CD4-positive, alpha-beta memory T cell (primary cell): ENCODE measurements at regions of chr17 and their contacts with region 1.

Region 1: GRCh38 chr17:7834962-7835813 is 1.2 kb downstream of the KDM6B start:
- DNase-seq: peak; percentile 90 to 98 (median 92)
- H3K4me3 ChIP-seq: peak overlapping the region; percentile 76 to 84
- H3K4me3 Mint-ChIP-seq: peak overlapping the region; percentile 90 to 98 (median 94)
- H3K27ac ChIP-seq: peak overlapping the region; percentile 98
- H3K27ac Mint-ChIP-seq: peak overlapping the region; percentile 99 to 100 (median 99)
- H3K4me1 ChIP-seq: peaks cover 45% of the 10 kb centered on the region
- H3K4me1 Mint-ChIP-seq: peaks cover 36 to 64% (median 42%) of the 10 kb centered on the region in 4 donors
- H3K27me3 ChIP-seq: no peaks in the 10 kb centered on the region
- H3K27me3 Mint-ChIP-seq: peaks cover 0 to 9% of the 10 kb centered on the region in 2 donors

Region 2: DNA sequence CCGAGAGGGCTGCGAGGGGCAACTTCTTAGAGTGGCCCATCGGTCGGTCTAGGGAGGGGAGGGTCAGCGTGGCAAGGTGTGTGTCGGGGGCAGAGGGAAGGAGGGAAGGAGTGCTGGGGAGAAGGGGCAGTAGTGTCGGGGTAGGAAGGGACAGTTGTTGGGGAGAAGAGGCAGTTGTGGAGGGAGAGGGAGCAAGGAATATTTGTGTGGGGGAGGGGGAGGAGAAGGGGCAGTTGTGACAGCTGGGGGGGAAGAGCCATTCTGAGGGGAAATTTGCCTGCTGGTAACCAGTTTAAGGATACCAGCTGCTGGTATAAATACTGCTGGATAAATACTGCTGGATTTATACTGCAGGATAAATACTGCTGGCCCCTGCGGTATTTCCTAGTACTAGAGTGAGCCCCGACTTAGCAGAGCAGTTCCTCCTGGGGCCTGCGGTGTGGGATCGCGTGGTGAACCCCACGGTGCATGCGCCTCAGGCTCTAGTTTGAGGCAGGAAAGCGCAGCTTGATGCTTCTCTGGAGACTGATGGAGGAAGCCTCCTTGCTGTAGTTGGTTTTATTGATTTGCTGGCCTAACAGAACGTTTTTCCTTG is 117.3 kb before region 1 on chr17:
- CTCF ChIA-PET with region 1: no interaction called
- POLR2A ChIA-PET with region 1: no interaction called
- intact Hi-C with region 1: no loop called
- DNase-seq: peak in 1 of 5 donors; percentile 27
- H3K4me3 ChIP-seq: peak overlapping the region in 1 of 2 donors; percentile 41
- H3K4me3 Mint-ChIP-seq: peak overlapping the region in 7 of 8 donors; percentile 50 to 86 (median 57)
- H3K27ac ChIP-seq: no peak overlapping the region
- H3K27ac Mint-ChIP-seq: no peak overlapping the region
- H3K4me1 ChIP-seq: peaks cover 21% of the 10 kb centered on the region
- H3K4me1 Mint-ChIP-seq: peaks cover 6 to 26% (median 18%) of the 10 kb centered on the region in 4 donors
- H3K27me3 ChIP-seq: peaks cover 28% of the 10 kb centered on the region
- H3K27me3 Mint-ChIP-seq: peaks cover 55 to 71% of the 10 kb centered on the region in 2 donors

Region 3: DNA sequence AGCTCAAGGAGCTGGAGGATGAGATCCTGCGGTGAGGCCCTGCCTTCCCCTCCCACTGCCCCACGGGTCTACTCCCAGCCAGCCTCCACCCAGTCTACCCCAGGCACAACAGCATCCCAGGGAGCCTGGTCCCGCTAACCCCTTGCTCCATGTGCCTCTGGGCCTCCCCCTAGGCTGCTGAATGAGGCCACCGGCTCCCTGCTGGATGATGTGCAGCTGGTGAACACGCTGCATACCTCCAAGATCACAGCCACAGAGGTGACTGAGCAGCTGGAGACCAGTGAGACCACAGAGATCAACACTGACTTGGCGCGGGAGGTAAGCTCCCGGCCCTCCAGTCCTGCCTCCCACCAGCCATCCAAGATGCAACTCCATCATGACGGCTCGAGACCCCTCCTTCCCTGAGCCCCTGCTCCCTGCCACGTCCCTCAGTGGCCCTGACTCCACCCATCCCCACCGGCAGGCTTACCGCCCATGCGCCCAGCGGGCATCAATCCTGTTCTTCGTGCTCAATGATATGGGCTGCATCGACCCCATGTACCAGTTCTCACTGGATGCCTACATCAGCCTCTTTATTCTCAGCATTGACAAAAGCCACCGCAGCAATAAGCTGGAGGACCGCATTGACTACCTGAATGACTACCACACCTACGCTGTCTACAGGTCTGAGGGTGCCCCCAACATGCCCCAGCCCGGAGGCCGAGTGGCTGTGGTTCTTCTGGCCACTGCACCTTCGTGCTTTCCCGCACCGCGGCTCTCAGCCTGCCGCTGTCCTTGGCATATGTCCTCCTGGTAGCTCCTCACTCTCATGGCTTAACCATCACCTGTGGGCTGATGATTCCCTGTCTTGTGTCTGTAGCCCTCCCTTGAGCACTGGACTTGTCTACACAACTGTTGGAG is 16.2 kb before region 1 on chr17:
- CTCF ChIA-PET with region 1: interaction called, 5 read pairs
- POLR2A ChIA-PET with region 1: interaction called, 3 read pairs
- intact Hi-C with region 1: loop called (anchors 1 kb)
- DNase-seq: no peak
- H3K4me3 ChIP-seq: no peak overlapping the region
- H3K4me3 Mint-ChIP-seq: no peak overlapping the region
- H3K27ac ChIP-seq: no peak overlapping the region
- H3K27ac Mint-ChIP-seq: no peak overlapping the region
- H3K4me1 ChIP-seq: no peaks in the 10 kb centered on the region
- H3K4me1 Mint-ChIP-seq: no peaks in the 10 kb centered on the region
- H3K27me3 ChIP-seq: no peaks in the 10 kb centered on the region
- H3K27me3 Mint-ChIP-seq: no peaks in the 10 kb centered on the region

Region 4: GRCh38 chr17:7851438-7852256 is 16.5 kb after region 1 on chr17:
- CTCF ChIA-PET with region 1: interaction called, 65 read pairs
- POLR2A ChIA-PET with region 1: interaction called, 238 read pairs
- intact Hi-C with region 1: loop called (anchors 1 kb)
- DNase-seq: peak; percentile 93 to 95 (median 95)
- H3K4me3 ChIP-seq: peak overlapping the region in 1 of 2 donors; percentile 30
- H3K4me3 Mint-ChIP-seq: peak overlapping the region; percentile 71 to 87 (median 78)
- H3K27ac ChIP-seq: peak overlapping the region; percentile 61
- H3K27ac Mint-ChIP-seq: peak overlapping the region; percentile 88 to 94 (median 93)
- H3K4me1 ChIP-seq: peaks cover 30% of the 10 kb centered on the region
- H3K4me1 Mint-ChIP-seq: peaks cover 15 to 21% (median 18%) of the 10 kb centered on the region in 4 donors
- H3K27me3 ChIP-seq: no peaks in the 10 kb centered on the region
- H3K27me3 Mint-ChIP-seq: no peaks in the 10 kb centered on the region

Region 5: GRCh38 chr17:7856883-7857723 is 21.9 kb after region 1 on chr17 and contains the start of gene NAA38:
- CTCF ChIA-PET with region 1: interaction called, 65 read pairs
- POLR2A ChIA-PET with region 1: interaction called, 238 read pairs
- intact Hi-C with region 1: loop called (anchors 1 kb)
- DNase-seq: peak; percentile 97 to 99 (median 98)
- H3K4me3 ChIP-seq: peak within 1 kb of the TSS; percentile 67 to 96
- H3K4me3 Mint-ChIP-seq: no peak within 1 kb of the TSS
- H3K27ac ChIP-seq: peak within 1 kb of the TSS; percentile 81
- H3K27ac Mint-ChIP-seq: no peak within 1 kb of the TSS
- H3K4me1 ChIP-seq: peaks cover 32% of the 10 kb centered on the region
- H3K4me1 Mint-ChIP-seq: peaks cover under 1 to 11% (median 7%) of the 10 kb centered on the region in 4 donors
- H3K27me3 ChIP-seq: no peaks in the 10 kb centered on the region
- H3K27me3 Mint-ChIP-seq: no peaks in the 10 kb centered on the region
- total RNA-seq, gene NAA38: 23.1 to 25.8 TPM

Region 6: DNA sequence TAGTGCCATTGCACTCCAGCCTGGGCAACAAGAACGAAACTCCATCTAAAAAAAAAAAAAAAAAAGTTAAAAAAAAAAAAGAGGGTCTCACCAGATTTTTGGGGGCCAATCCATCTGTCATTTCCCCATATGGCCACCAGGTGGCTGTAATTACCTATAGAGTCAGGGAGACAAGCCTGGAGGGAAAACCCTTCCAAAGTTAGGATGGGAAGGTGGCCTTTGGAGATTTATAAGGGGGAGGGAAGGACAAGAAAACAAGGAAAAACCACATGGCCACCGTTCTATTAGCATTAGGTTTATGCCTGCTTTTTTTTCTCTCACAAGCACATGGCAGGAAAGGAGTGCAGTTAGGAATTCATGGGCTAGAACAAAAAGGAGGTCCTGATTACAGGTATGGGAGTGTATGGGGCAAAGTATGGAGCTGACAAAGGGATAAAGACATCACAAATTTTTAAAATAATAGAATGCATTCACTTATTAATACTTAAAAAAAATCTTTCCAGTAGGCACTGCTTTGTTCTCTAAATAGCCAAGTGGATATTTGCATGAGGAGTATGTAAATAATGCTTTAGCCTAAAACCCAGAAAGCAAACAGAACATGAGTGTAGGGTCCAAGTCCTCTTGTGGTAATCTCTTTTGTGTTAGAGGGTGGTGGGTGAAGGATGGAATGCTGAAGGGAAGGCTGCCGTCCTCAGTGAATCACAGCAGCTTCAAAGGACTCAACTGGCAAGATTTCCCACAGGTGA is 27.7 kb after region 1 on chr17:
- CTCF ChIA-PET with region 1: interaction called, 13 read pairs
- POLR2A ChIA-PET with region 1: interaction called, 73 read pairs
- intact Hi-C with region 1: no loop called
- DNase-seq: peak; percentile 35 to 58 (median 41)
- H3K4me3 ChIP-seq: no peak overlapping the region
- H3K4me3 Mint-ChIP-seq: no peak overlapping the region
- H3K27ac ChIP-seq: no peak overlapping the region
- H3K27ac Mint-ChIP-seq: peak overlapping the region in 5 of 7 donors; percentile 11 to 80 (median 15)
- H3K4me1 ChIP-seq: peaks cover 27% of the 10 kb centered on the region
- H3K4me1 Mint-ChIP-seq: peaks cover 18 to 31% (median 22%) of the 10 kb centered on the region in 4 donors
- H3K27me3 ChIP-seq: no peaks in the 10 kb centered on the region
- H3K27me3 Mint-ChIP-seq: no peaks in the 10 kb centered on the region

Region 7: GRCh38 chr17:7867881-7868329 is 32.7 kb after region 1 on chr17:
- CTCF ChIA-PET with region 1: interaction called, 13 read pairs
- POLR2A ChIA-PET with region 1: interaction called, 17 read pairs
- intact Hi-C with region 1: no loop called
- DNase-seq: peak in 1 of 5 donors; percentile 36
- H3K4me3 ChIP-seq: peak overlapping the region in 1 of 2 donors; percentile 29
- H3K4me3 Mint-ChIP-seq: peak overlapping the region; percentile 50 to 84 (median 72)
- H3K27ac ChIP-seq: peak overlapping the region; percentile 39
- H3K27ac Mint-ChIP-seq: peak overlapping the region; percentile 59 to 90 (median 89)
- H3K4me1 ChIP-seq: peaks cover 30% of the 10 kb centered on the region
- H3K4me1 Mint-ChIP-seq: peaks cover 27 to 41% (median 34%) of the 10 kb centered on the region in 4 donors
- H3K27me3 ChIP-seq: no peaks in the 10 kb centered on the region
- H3K27me3 Mint-ChIP-seq: no peaks in the 10 kb centered on the region

Region 8: DNA sequence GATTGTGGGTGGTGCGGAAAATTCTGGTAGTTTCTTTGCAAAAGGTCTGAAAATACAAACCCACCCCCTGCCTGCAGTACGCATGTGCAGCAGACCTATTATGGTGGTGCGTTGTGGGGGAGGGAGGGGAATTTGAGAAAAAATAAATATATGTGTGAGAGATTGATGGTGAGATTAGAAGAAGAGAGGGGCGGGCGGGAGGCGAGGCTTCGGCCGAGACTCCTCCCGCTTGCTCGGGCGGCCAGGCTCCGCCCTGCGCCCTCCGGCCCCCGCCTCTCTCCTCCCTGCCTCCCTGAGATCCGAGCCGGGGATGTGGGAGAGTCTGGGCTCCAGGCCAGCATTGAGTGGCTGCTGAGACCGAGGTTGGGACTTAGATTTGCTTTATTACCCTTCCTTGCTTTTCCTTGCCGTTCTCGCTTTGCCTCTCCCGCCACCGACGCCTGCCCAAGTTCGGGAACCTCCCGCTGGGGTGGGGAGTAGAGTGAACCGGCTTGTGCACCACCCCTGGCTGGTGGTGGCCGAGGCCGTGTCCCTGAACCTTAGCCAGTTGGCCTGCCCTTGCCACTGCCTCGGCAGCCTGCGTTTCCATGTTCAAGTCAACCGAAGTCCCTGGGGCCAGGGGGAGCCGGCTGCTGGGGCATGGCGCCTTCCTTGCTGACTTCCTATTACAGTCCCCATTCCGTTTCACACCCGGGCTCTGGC is 52.4 kb after region 1 on chr17:
- CTCF ChIA-PET with region 1: no interaction called
- POLR2A ChIA-PET with region 1: interaction called, 19 read pairs
- intact Hi-C with region 1: loop called (anchors 1 kb)
- DNase-seq: peak; percentile 89 to 95 (median 92)
- H3K4me3 ChIP-seq: peak overlapping the region; percentile 86 to 96
- H3K4me3 Mint-ChIP-seq: no peak overlapping the region
- H3K27ac ChIP-seq: peak overlapping the region; percentile 65
- H3K27ac Mint-ChIP-seq: no peak overlapping the region
- H3K4me1 ChIP-seq: peaks cover 46% of the 10 kb centered on the region
- H3K4me1 Mint-ChIP-seq: peaks cover 10 to 16% (median 12%) of the 10 kb centered on the region in 4 donors
- H3K27me3 ChIP-seq: no peaks in the 10 kb centered on the region
- H3K27me3 Mint-ChIP-seq: no peaks in the 10 kb centered on the region